ENCODE measurements at regions of chr9 and their contacts with region 1.

Region 1: GRCh38 chr9:19464764-19465585 is 56.2 kb downstream of the ACER2 start:
- H3K4me3 ChIP-seq: peak overlapping the region; percentile 37
- H3K27ac ChIP-seq: no peak overlapping the region
- H3K4me1 ChIP-seq: no peaks in the 10 kb centered on the region; the same call in 1 of the 2 replicates
- CTCF ChIP-seq: peak; percentile 47; the same call in 1 of the 2 replicates

Region 2: GRCh38 chr9:19431361-19432171 is 33.4 kb before region 1 on chr9:
- CTCF ChIA-PET with region 1: interaction called, 11 read pairs
- POLR2A ChIA-PET with region 1: interaction called, 5 read pairs
- H3K4me3 ChIP-seq: no peak overlapping the region
- H3K27ac ChIP-seq: no peak overlapping the region
- H3K4me1 ChIP-seq: no peaks in the 10 kb centered on the region
- CTCF ChIP-seq: no peak

Region 3: DNA sequence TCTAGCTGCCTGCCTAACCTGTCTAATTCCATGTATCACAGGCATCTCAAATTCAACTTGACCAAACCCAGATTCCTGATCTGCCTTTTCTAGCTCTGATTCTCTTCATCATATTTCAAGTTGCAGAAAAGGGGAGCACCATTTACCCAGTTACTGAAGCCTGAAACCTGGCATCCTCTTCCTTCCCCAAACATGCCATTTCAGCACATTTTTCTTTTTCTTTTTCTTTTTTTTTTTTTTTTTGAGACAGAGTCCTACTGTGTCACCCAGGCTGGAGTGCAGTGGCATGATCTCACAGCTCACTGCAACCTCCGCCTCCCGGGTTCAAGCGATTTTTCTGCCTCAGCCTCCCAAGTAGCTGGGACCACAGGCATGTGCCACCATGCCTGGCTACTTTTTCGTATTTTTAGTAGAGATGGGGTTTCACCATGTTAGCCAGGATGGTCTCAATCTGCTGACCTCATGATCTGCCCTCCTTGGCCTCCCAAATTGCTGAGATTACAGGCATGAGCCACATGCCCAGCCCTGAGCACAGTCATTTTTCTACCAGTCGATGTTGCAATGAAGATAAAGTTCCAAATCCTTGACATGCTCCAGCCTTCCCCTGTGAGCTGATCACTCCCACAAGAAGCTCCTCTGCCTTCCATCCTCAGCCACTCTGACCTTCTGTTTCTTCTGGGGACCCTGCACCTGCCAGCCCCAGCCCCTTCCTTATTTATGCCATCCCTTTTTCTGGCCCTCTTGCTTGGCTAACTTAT is 24.0 kb before region 1 on chr9:
- CTCF ChIA-PET with region 1: interaction called, 10 read pairs
- POLR2A ChIA-PET with region 1: no interaction called
- H3K4me3 ChIP-seq: no peak overlapping the region
- H3K27ac ChIP-seq: no peak overlapping the region
- H3K4me1 ChIP-seq: no peaks in the 10 kb centered on the region
- CTCF ChIP-seq: no peak

Region 4: DNA sequence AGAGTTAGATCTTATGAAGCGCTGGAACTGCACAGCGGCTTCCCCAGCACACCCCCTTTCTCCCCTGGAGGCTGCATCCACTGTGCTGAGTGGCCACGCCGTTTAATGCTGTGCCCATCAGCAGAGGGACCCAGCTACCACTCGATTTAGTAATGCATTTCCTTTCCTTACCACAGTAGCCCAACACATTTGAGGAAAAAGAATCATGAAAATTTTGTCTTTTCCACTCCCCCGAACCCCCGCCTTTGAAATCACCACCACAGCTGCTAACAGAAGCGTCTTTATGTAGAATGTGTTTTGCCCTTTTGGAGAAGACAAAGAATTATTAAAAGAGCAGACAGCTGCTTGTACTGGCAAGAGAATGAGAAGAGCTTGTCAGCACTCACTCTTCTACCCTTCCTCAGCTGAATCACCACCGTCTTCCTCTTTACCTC is 17.0 kb after region 1 on chr9:
- CTCF ChIA-PET with region 1: interaction called, 15 read pairs
- POLR2A ChIA-PET with region 1: no interaction called
- H3K4me3 ChIP-seq: no peak overlapping the region
- H3K27ac ChIP-seq: no peak overlapping the region
- H3K4me1 ChIP-seq: no peaks in the 10 kb centered on the region
- CTCF ChIP-seq: no peak

Region 5: GRCh38 chr9:19488721-19489120 is 23.7 kb after region 1 on chr9:
- CTCF ChIA-PET with region 1: interaction called, 11 read pairs
- POLR2A ChIA-PET with region 1: no interaction called
- H3K4me3 ChIP-seq: no peak overlapping the region
- H3K27ac ChIP-seq: no peak overlapping the region
- H3K4me1 ChIP-seq: no peaks in the 10 kb centered on the region
- CTCF ChIP-seq: no peak

Region 6: DNA sequence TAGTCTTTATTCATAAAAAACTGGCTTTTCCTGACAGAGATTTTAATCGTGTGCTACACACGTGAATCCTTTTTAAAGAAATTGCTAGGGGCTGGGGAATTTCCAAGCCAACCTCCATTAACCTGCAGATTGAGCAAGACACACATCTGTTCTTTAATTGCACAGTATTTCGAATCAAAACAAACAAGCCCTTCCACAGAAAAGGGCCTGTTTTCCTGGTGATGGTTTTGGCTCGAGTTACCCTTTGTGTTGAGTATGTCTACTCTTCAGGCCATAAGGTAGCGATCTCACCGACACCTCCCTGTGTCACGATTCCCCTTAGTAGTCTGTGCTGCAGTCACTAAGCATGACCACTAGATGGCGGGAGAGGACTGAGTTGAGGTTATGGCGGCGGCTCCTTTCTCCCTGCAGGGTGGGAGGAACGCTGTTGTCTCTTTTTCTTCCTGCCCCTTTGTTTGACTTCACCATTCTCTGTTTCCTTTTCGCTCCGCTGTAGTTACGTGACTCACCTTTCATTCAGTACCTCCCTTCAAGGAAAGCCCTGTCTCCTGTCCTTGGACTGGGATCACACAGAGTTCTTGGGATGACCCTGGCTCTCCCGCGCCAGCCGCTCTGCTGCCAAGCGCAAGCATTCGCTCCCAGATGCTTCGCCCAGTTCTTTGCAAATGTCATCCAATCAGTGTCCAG is 461.0 kb after region 1 on chr9:
- CTCF ChIA-PET with region 1: interaction called, 39 read pairs
- POLR2A ChIA-PET with region 1: interaction called, 4 read pairs
- H3K4me3 ChIP-seq: peak overlapping the region; percentile 28
- H3K27ac ChIP-seq: no peak overlapping the region
- H3K4me1 ChIP-seq: no peaks in the 10 kb centered on the region
- CTCF ChIP-seq: peak; percentile 88

Measured in HEK293 (cell line).